AG04449 (cell line): ENCODE measurements at regions of chr1 and their contacts with region 1.

Region 1: DNA sequence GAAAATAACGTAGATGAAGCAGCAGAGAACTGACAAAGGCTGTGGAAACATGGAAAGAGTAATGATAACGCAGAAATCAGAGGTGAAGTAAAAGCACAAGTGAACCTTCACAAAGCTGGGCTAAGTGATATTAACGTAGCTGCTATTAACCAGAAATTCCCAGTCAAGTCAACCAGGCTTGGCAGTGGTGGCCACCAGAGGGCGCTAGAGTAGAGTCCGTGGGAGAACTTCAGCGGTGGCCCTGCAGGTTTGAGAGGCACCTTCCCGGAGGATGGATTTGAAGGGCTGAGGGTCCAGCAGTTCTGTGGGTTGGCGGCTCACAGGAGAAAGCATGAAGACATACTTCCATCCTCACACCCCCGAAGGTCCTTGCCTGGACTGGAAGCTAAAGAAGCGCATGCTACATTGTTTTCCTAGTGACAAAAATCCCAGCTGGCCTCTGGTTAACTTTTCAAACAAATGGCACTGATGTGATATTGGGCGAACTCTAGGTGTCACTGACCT is 81.7 kb upstream of the ZNF648 start:
- DNase-seq: peak; percentile 16
- H3K4me3 ChIP-seq: no peak overlapping the region
- CTCF ChIP-seq: peak; percentile 88

Region 2: GRCh38 chr1:181985936-181986906 is 157.0 kb before region 1 on chr1:
- CTCF ChIA-PET with region 1: no interaction called
- POLR2A ChIA-PET with region 1: no interaction called
- DNase-seq: no peak
- H3K4me3 ChIP-seq: no peak overlapping the region
- CTCF ChIP-seq: no peak

Region 3: GRCh38 chr1:182092336-182092735 is 50.9 kb before region 1 on chr1:
- CTCF ChIA-PET with region 1: interaction called, 10 read pairs
- POLR2A ChIA-PET with region 1: no interaction called
- DNase-seq: no peak
- H3K4me3 ChIP-seq: no peak overlapping the region
- CTCF ChIP-seq: no peak

Region 4: GRCh38 chr1:182129398-182129797 is 13.8 kb before region 1 on chr1:
- CTCF ChIA-PET with region 1: interaction called, 47 read pairs
- POLR2A ChIA-PET with region 1: no interaction called
- DNase-seq: no peak
- H3K4me3 ChIP-seq: no peak overlapping the region
- CTCF ChIP-seq: no peak

Region 5: DNA sequence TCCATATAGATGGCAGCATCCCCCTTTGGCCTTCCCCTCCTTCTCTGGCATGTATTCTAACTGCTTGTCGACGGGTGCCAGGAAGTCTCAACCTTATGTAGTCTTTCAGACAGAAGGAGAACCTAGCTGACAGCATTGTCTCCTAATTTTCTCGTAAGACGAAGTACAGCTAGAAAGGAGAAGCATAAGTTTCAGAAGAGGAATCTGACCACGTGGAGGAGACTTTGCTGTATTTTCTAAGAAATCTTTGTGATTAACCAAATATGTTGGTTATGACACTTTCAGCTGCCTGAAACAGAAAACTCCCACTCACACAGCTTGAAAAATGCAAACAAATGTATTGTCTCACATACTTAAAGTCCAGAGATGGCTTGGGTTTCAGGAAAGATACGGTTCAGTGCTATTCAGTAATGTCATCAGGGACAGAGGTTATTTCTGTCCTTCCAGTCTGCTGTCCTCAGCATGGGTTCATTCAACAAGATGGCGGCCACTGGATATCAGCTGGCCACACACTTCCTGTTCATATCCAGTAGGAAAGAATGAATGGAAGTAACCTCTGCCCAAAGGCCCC is 27.8 kb after region 1 on chr1:
- CTCF ChIA-PET with region 1: interaction called, 14 read pairs
- POLR2A ChIA-PET with region 1: no interaction called
- DNase-seq: no peak
- H3K4me3 ChIP-seq: no peak overlapping the region
- CTCF ChIP-seq: no peak

Region 6: DNA sequence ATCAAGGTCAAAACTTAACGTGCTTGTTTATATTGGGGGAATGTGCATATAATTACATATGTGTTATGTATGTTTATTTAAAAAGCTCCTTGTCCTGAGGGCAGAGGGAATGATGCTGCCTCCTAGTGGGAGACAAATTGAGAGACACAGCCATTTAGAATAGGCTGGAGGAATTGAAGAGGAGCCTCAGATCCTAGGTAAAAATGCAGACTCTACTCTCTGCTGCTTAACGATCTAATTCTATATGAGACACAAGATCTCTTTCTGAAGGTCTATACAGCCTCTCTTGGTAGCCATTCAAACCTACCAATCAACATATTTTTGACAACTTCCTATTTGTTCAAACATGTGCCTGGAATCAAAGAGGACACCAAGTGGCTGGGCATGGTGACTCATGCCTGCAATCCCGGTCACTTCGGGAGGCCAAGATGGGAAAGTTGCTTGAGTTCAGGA is 54.9 kb after region 1 on chr1:
- CTCF ChIA-PET with region 1: interaction called, 12 read pairs
- POLR2A ChIA-PET with region 1: no interaction called
- DNase-seq: no peak
- H3K4me3 ChIP-seq: no peak overlapping the region
- CTCF ChIP-seq: no peak

Region 7: GRCh38 chr1:182381962-182382819 is 239.0 kb after region 1 on chr1:
- CTCF ChIA-PET with region 1: interaction called, 18 read pairs
- POLR2A ChIA-PET with region 1: no interaction called
- DNase-seq: no peak
- H3K4me3 ChIP-seq: no peak overlapping the region
- CTCF ChIP-seq: no peak

Region 8: DNA sequence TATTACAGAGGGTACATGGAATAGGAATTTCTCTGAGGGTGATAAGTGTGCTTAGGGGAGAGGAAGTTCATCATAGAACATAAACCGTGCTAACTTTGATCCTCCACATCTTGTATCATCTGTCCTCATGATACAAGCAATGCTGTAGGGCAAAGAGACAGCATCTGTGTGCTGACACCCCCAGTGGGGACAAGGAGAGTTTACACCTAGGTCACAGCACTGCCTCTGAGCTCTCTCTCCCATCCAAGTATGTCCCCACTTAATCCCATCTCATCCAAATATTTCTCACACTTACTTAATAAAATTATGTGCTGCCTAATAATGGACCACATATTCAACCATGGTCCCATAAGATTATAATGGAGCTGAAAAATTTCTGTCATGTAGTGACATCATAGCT is 261.6 kb after region 1 on chr1:
- CTCF ChIA-PET with region 1: interaction called, 504 read pairs
- POLR2A ChIA-PET with region 1: no interaction called
- DNase-seq: no peak
- H3K4me3 ChIP-seq: no peak overlapping the region
- CTCF ChIP-seq: no peak